ENCODE measurements at regions of chr1 and their contacts with region 1.

Region 1: DNA sequence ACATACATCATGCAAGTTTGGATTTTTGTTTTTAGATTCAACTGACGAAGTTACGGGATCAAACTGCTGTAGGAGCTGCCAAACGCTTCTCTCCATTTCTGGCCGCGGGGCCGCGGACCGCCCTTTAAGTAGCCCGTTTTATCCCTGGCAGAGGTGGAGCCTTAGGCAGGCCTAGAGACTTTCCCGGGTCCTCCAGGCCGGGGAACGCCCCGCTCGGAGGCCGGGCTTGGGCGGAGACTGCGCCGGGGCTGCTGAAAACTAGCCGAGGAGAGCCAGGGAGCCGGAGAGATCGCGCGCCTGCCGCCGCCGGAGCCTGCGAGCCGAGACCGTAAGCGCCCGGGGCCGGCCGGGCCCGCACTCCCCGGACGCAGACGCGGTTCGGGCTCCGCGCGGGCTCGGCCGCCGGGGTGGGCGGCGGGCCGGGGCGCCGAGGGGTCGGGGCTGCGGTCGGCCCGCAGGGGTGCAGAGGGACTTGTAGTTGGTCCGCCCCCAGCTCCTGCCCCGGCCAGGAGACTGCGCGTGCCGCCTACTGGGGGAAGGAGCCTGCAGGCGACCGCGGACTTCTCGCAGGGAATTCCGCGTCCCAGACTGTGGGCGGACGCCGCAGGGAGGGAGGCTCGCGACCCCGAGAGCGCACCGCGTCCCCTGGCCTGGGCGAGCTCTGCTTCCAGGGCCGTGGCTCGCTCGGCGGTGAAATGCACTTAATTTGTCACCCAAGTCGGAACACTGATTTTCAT is at the start of gene EPHX1:
- DNase-seq: peak; percentile 93 to 95 (median 94)
- ATAC-seq: peak; percentile 87 to 95 (median 92)
- H3K4me3 ChIP-seq: peak within 1 kb of the TSS; percentile 38 to 95 (median 74)
- H3K27ac ChIP-seq: peak within 1 kb of the TSS; percentile 41 to 96 (median 88)
- H3K4me1 ChIP-seq: peaks cover 13 to 52% (median 38%) of the 10 kb centered on the region in 12 donors
- H3K27me3 ChIP-seq: no peaks in the 10 kb centered on the region
- CTCF ChIP-seq: peak in 9 of 12 donors; percentile 10 to 59 (median 43)
- POLR2A ChIP-seq: peak in 1 of 2 donors; percentile 83
- total RNA-seq, gene EPHX1: 29.0 to 96.8 (median 47.0) TPM

Region 2: GRCh38 chr1:225720937-225721336 is 89.1 kb before region 1 on chr1:
- intact Hi-C with region 1: no loop called
- DNase-seq: no peak
- ATAC-seq: no peak
- H3K4me3 ChIP-seq: no peak overlapping the region
- H3K27ac ChIP-seq: no peak overlapping the region
- H3K4me1 ChIP-seq: no peaks in the 10 kb centered on the region
- H3K27me3 ChIP-seq: no peaks in the 10 kb centered on the region
- CTCF ChIP-seq: no peak
- POLR2A ChIP-seq: no peak

Region 3: DNA sequence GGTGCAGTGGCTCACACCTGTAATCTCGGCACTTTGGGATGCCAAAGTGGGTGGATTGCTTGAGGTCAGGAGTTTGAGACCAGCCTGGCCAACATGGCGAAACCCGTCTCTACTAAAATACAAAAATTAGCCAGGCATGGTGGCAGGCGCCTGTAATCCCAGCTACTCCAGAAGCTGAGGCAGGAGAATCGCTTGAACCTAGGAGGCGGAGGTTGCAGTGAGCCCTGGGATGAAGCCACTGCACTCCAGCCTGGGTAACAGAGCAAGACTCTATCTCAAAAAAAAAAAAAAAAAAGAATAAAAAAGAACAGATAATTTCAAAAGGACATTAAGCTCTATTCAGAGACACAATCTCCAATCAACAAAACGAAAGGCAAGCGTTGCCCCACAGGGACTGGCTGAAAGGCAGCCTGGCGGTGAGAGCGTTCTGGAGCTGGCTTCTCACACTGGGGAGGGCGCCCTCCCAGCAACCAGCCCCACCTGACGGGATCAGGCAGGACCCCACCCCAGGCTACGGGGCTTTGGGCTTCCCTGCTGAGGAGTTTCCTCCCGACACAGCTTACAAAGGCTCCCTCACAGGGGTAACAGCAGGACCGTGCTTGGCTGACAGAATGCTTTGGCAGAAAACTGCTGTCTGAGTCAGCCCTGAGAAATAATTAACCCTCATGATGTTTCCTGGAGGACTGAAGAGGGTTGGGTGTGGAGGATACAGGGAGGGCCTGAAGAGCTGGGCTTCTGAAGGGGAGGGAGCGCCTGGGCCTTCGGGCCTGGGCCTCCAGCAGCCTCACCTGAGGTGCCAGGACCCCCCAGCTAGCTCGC is 63.4 kb before region 1 on chr1:
- intact Hi-C with region 1: no loop called
- DNase-seq: peak; percentile 78 to 85 (median 83)
- ATAC-seq: peak; percentile 91 to 98 (median 97)
- H3K4me3 ChIP-seq: peak overlapping the region in 11 of 12 donors; percentile 3 to 60 (median 48)
- H3K27ac ChIP-seq: peak overlapping the region; percentile 78 to 96 (median 88)
- H3K4me1 ChIP-seq: peaks cover 2 to 48% (median 27%) of the 10 kb centered on the region in 12 donors
- H3K27me3 ChIP-seq: no peaks in the 10 kb centered on the region
- CTCF ChIP-seq: peak in 6 of 12 donors; percentile 13 to 33 (median 28)
- POLR2A ChIP-seq: no peak

Region 4: DNA sequence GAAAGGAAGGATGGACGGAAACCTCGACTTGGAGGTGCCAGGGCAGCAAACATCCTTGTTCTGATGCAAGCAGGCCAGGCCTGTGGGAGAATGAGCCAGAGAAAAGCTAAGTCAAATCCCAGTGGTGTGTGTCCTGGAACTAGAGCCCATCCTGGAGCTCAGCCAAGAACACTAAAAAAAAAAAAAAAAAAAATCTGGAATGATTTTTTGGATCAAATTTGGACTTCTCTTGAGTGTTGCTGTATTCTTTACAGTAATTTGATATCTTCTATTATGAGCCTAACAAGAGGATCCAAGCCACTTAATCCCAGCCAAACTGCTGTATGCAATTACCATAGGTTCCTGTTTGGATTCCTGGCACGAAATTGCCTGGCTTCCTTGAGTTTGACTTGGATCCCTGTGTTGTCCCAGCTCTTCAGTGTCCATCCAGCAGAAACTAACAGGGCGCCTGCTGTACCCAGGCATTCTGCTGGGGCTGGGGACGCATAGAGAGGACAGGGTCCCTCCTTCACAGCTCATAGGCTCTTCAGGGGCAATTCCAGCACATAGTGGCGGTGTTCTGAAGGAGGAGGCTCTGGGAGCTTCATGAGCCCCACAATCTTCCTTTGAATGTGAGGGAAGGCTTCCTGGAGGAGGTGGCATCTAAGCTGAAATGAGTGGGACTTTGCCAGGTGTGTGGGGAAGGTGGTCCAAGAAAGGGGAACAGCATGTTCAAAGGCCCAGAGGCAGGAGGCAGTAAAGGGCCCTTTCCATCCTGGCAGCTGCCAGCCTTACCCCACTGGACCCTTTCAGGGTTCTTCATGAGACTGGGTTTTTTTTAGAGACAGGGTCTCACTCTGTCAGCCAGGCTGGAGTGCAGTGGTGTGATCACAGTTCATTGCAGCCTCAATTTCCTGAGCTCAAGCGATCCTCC is 24.7 kb after region 1 on chr1:
- intact Hi-C with region 1: loop called in 1 of 10 experiments (anchors 2 kb)
- DNase-seq: peak in 4 of 5 donors; percentile 59 to 78 (median 64)
- ATAC-seq: peak; percentile 74 to 90 (median 84)
- H3K4me3 ChIP-seq: no peak overlapping the region
- H3K27ac ChIP-seq: peak overlapping the region; percentile 28 to 81 (median 63)
- H3K4me1 ChIP-seq: peaks cover 6 to 25% (median 19%) of the 10 kb centered on the region in 12 donors
- H3K27me3 ChIP-seq: no peaks in the 10 kb centered on the region
- CTCF ChIP-seq: no peak
- POLR2A ChIP-seq: no peak

Region 5: GRCh38 chr1:225845571-225846259 is 35.7 kb after region 1 on chr1:
- intact Hi-C with region 1: loop called in 4 of 10 experiments (anchors 5 kb)
- DNase-seq: peak; percentile 77 to 87 (median 82)
- ATAC-seq: peak; percentile 66 to 83 (median 82)
- H3K4me3 ChIP-seq: no peak overlapping the region
- H3K27ac ChIP-seq: peak overlapping the region in 6 of 12 donors; percentile 6 to 71 (median 17)
- H3K4me1 ChIP-seq: peaks cover 0 to 30% (median 16%) of the 10 kb centered on the region in 12 donors
- H3K27me3 ChIP-seq: no peaks in the 10 kb centered on the region
- CTCF ChIP-seq: peak; percentile 56 to 87 (median 74)
- POLR2A ChIP-seq: no peak

Region 6: GRCh38 chr1:225881969-225882693 is 72.1 kb after region 1 on chr1 and contains the start of gene TMEM63A:
- intact Hi-C with region 1: loop called in 2 of 10 experiments (anchors 2 to 5 kb)
- DNase-seq: peak; percentile 94 to 98 (median 96)
- ATAC-seq: peak; percentile 85 to 93 (median 92)
- H3K4me3 ChIP-seq: peak within 1 kb of the TSS; percentile 71 to 99 (median 90)
- H3K27ac ChIP-seq: peak within 1 kb of the TSS; percentile 82 to 98 (median 90)
- H3K4me1 ChIP-seq: peaks cover 6 to 56% (median 48%) of the 10 kb centered on the region in 12 donors
- H3K27me3 ChIP-seq: no peaks in the 10 kb centered on the region
- CTCF ChIP-seq: peak in 11 of 12 donors; percentile 16 to 71 (median 50)
- POLR2A ChIP-seq: peak in 1 of 2 donors; percentile 81
- total RNA-seq, gene TMEM63A: 14.4 to 42.7 (median 25.3) TPM